Caco-2 (cell line): ENCODE measurements at regions of chr11 and their contacts with region 1.

Region 1: DNA sequence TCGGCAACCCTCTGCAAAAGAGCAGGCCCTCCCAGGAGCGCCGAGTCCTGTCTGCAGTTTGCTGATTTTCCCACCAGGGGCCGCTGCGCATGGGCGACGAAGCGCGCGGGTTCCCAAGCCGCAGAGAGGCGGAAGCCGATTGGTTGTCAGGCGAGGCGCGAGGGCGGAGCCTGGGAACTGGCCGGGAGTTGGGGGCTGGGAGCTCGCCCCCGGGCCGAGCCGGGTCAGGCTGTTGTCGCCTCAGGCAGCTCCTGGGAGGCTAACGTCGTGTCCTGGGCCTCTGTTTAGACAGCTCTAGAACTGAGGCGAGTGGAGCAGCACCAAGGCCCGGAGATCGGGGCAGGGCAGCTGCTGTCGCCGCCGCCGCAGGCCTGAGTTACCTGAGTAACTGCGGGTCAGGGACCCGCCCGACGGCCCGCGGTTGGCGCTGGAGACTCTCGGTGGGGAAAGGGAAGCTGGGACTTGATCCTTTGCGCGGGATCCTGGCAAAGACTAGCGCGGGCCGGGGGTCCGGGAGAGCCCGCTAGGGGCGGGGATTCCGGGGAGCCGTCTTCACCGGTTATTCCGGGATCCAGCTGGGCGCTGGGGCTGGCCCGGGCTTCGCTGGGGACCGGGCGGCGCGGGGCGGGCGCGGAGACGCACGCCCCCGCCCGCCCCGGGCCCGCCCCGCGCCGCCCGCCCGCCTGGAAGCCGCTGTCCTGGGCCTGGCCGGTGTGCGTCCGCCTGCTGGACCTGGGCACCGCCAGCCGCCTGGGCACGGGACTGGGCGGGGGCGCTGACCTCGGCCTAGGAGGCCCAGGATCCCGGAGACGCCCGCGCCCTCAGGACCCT is at the start of gene STIM1:
- DNase-seq: peak; percentile 93 to 98
- H3K4me3 ChIP-seq: peak within 1 kb of the TSS; percentile 92
- H3K4me3 Mint-ChIP-seq: peak within 1 kb of the TSS; percentile 84
- H3K27ac Mint-ChIP-seq: peak within 1 kb of the TSS; percentile 69
- H3K4me1 ChIP-seq: peaks cover 15% of the 10 kb centered on the region
- H3K4me1 Mint-ChIP-seq: peaks cover 25% of the 10 kb centered on the region
- H3K27me3 ChIP-seq: no peaks in the 10 kb centered on the region
- H3K27me3 Mint-ChIP-seq: no peaks in the 10 kb centered on the region
- CTCF ChIP-seq: peak; percentile 93 to 94
- total RNA-seq, gene STIM1: 54.2 and 55.1 TPM in 2 replicates

Region 2: DNA sequence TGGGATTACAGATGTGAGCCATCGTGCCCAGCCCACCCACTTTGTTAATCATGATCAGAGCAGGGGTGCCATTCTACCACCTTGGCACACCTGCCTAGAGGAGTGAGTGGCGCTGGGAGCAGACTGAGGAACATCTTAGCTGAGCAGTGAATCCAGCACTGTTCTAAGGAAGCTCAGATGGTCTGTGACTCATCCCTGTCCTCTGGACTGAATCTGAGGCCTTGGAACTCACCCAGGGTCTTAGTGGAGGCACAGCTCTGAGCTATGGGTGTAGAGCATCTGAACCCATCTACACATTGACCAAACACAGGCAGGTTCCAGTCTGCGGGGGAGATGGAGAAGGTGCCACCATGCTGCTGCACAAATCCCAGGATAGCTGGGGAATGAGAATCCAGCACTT is 31.9 kb before region 1 on chr11:
- CTCF ChIA-PET with region 1: no interaction called
- POLR2A ChIA-PET with region 1: no interaction called
- intact Hi-C with region 1: no loop called
- DNase-seq: no peak
- H3K4me3 ChIP-seq: no peak overlapping the region
- H3K4me3 Mint-ChIP-seq: no peak overlapping the region
- H3K27ac Mint-ChIP-seq: no peak overlapping the region
- H3K4me1 ChIP-seq: no peaks in the 10 kb centered on the region
- H3K4me1 Mint-ChIP-seq: no peaks in the 10 kb centered on the region
- H3K27me3 ChIP-seq: no peaks in the 10 kb centered on the region
- H3K27me3 Mint-ChIP-seq: no peaks in the 10 kb centered on the region
- CTCF ChIP-seq: no peak

Region 3: GRCh38 chr11:3841426-3842350 is 13.5 kb before region 1 on chr11:
- CTCF ChIA-PET with region 1: interaction called, 63 read pairs
- POLR2A ChIA-PET with region 1: interaction called, 11 read pairs
- intact Hi-C with region 1: no loop called
- DNase-seq: peak; percentile 88 to 94
- H3K4me3 ChIP-seq: peak overlapping the region; percentile 68
- H3K4me3 Mint-ChIP-seq: peak overlapping the region; percentile 96
- H3K27ac Mint-ChIP-seq: peak overlapping the region; percentile 84
- H3K4me1 ChIP-seq: peaks cover 9% of the 10 kb centered on the region; the same call in 1 of the 2 replicates
- H3K4me1 Mint-ChIP-seq: peaks cover 10% of the 10 kb centered on the region
- H3K27me3 ChIP-seq: no peaks in the 10 kb centered on the region
- H3K27me3 Mint-ChIP-seq: no peaks in the 10 kb centered on the region
- CTCF ChIP-seq: peak; percentile 77 to 95

Region 4: DNA sequence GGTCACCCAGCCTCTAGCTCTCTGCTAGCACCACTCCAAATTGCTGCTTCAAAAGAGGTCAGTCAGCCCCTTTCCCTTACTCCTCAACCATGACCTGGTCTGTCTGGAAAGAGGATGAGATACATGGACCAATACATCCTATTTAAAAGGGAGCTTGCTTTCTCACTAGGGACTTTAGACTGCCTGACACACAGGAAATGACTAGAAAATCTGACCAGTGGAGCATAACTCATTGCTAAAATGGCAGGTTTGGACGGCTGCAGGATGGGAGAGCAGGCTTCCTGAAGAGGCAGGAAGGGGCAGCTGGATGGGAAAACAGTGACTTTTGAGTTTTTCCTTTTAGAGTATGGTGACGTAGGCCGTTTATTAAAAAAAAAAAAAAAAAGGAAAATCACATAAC is 25.5 kb after region 1 on chr11:
- CTCF ChIA-PET with region 1: interaction called, 24 read pairs
- POLR2A ChIA-PET with region 1: interaction called, 6 read pairs
- intact Hi-C with region 1: loop called (anchors 1 kb)
- DNase-seq: no peak
- H3K4me3 ChIP-seq: no peak overlapping the region
- H3K4me3 Mint-ChIP-seq: no peak overlapping the region
- H3K27ac Mint-ChIP-seq: peak overlapping the region; percentile 90
- H3K4me1 ChIP-seq: peaks cover 53% of the 10 kb centered on the region
- H3K4me1 Mint-ChIP-seq: peaks cover 40% of the 10 kb centered on the region
- H3K27me3 ChIP-seq: no peaks in the 10 kb centered on the region
- H3K27me3 Mint-ChIP-seq: no peaks in the 10 kb centered on the region
- CTCF ChIP-seq: no peak

Region 5: GRCh38 chr11:3959015-3959919 is 104.1 kb after region 1 on chr11:
- CTCF ChIA-PET with region 1: interaction called, 34 read pairs
- POLR2A ChIA-PET with region 1: no interaction called
- intact Hi-C with region 1: loop called (anchors 1 kb)
- DNase-seq: peak in 1 of 2 experiments; percentile 40
- H3K4me3 ChIP-seq: no peak overlapping the region
- H3K4me3 Mint-ChIP-seq: no peak overlapping the region
- H3K27ac Mint-ChIP-seq: peak overlapping the region; percentile 10
- H3K4me1 ChIP-seq: peaks cover 6% of the 10 kb centered on the region; the same call in 1 of the 2 replicates
- H3K4me1 Mint-ChIP-seq: peaks cover 29% of the 10 kb centered on the region
- H3K27me3 ChIP-seq: no peaks in the 10 kb centered on the region
- H3K27me3 Mint-ChIP-seq: no peaks in the 10 kb centered on the region
- CTCF ChIP-seq: peak; percentile 45 to 57

Region 6: DNA sequence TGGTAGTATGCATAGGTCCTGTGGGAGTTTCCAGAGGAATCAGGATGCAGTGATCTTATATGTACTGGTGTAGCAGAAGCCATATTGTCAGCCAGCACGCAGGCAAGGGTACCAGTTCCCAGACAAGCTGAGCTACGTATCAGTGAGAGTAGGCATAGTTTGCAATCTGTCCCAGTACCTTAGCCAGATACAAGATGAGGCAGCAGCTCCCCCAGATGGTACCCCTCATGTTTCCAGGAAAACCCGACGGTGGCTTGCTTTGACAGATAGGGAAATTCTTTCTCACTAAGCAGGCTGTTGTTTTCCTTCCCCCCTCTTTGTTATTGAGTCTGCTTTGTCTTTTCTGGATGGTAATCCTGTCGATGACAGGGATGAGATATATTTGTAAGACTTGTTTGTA is 129.7 kb after region 1 on chr11:
- CTCF ChIA-PET with region 1: interaction called, 6 read pairs
- POLR2A ChIA-PET with region 1: no interaction called
- intact Hi-C with region 1: loop called (anchors 1 kb)
- DNase-seq: peak in 1 of 2 experiments; percentile 29
- H3K4me3 ChIP-seq: no peak overlapping the region
- H3K4me3 Mint-ChIP-seq: no peak overlapping the region
- H3K27ac Mint-ChIP-seq: no peak overlapping the region
- H3K4me1 ChIP-seq: no peaks in the 10 kb centered on the region
- H3K4me1 Mint-ChIP-seq: peaks cover 7% of the 10 kb centered on the region
- H3K27me3 ChIP-seq: no peaks in the 10 kb centered on the region
- H3K27me3 Mint-ChIP-seq: no peaks in the 10 kb centered on the region
- CTCF ChIP-seq: peak in 1 of 2 experiments; percentile 35

Region 7: DNA sequence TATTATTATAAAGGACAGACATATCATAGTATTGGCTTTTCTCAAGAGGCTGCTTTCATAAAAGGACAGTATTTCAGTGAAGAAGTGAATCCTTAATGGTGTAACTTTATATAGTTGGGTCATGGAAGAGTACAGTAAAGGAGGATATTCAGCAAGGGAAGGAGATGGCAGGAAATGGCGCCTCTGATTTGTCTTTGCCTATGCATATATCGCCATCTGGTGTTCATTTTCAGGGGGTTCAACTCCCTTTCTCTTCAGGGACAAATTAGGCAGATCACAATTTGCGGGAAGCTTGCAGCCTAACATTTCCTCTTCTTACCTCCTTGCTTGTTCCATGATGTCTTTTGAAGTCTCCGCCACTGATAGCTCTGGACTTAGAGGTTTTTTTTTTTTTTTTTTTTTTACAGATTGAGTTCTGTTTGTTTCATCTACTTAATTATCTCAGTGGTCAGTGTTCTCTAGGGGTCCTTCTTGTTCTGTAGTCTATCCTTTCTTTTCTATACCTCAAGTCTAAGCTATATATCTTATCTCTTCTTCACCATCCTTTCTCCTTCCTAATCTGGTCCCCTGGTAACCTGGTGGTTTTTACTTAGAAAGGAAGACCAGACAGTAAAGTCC is 217.6 kb after region 1 on chr11:
- CTCF ChIA-PET with region 1: interaction called, 81 read pairs
- POLR2A ChIA-PET with region 1: interaction called, 4 read pairs
- intact Hi-C with region 1: loop called (anchors 1 kb)
- DNase-seq: peak; percentile 63 to 76
- H3K4me3 ChIP-seq: no peak overlapping the region
- H3K4me3 Mint-ChIP-seq: no peak overlapping the region
- H3K27ac Mint-ChIP-seq: no peak overlapping the region
- H3K4me1 ChIP-seq: no peaks in the 10 kb centered on the region
- H3K4me1 Mint-ChIP-seq: no peaks in the 10 kb centered on the region
- H3K27me3 ChIP-seq: no peaks in the 10 kb centered on the region
- H3K27me3 Mint-ChIP-seq: no peaks in the 10 kb centered on the region
- CTCF ChIP-seq: peak; percentile 69 to 92